SK-N-SH (cell line): ENCODE measurements at regions of chr1 and their contacts with region 1.

Region 1: DNA sequence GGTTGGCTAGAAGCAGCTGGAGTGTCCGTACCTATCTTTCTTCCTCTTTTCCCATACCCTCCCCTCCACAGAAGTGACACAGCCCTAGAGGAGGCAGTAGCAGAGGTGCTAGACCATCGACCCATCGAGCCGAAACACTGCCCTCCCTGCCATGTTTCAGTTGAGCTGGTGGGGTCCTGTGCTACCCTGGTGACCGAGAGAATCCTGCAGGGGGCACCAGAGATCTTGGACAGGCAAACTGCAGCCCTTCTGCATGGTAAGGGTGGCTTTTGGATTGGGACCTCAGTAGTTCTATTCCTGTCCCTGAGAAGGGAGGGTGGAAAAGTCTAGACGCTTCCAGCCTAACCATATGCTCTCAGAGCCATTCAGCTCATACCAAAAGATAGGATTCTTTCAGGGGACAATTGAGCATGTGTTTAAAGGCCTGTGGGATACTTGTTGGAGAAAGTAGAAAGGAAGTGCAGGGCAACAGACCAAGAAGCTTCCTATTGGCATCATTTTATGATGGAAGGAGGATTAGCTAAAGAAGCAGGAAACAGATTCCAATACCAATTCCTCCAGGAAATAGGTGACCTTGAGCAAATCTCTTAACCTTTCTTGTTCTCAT is 11.7 kb upstream of the BNIPL start:
- DNase-seq: peak; percentile 80
- H3K4me3 ChIP-seq: no peak overlapping the region; a peak in 1 of 4 replicates
- H3K27ac ChIP-seq: no peak overlapping the region
- H3K4me1 ChIP-seq: no peaks in the 10 kb centered on the region
- H3K27me3 ChIP-seq: no peaks in the 10 kb centered on the region
- CTCF ChIP-seq: peak; percentile 76
- EP300 ChIP-seq: no peak
- RAD21 ChIP-seq: peak; percentile 81

Region 2: DNA sequence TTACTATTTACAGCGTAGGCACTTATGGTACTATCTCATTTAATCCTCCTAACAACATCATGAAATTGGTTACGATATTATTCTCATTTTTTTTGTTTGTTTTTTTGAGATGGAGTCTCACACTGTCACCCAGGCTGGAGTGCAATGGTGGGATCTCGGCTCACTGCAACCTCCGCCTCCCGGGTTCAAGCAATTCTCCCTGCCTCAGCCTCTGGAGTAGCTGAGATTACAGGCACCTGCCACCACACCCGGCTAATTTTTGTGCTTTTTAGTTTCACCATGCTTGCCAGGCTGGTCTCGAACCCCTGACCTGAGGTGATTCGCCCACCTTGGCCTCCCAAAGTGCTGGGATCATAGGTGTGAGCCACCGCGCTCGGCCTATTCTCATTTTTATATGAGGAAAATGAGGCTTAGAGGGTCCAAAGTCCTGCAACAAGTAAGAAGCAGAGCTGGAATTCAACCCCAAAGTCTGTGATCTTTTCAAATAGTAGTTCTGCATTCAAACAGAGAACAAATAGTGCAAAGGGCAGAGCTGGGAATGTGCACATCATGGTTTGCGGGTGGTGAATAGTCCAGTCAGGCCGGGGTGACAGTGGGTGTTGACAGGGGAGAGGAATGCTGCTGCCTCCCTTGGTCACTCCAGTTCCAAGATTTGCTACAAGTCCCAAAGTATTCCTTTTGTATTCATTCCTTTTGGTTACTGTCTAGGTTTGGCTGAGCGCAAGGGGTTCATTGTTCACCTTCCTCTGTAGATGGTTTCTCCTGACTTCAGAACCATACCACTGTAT is 11.8 kb before region 1 on chr1:
- CTCF ChIA-PET with region 1: interaction called, 13 read pairs
- POLR2A ChIA-PET with region 1: no interaction called
- DNase-seq: no peak
- H3K4me3 ChIP-seq: no peak overlapping the region
- H3K27ac ChIP-seq: no peak overlapping the region
- H3K4me1 ChIP-seq: peaks cover 5 to 6% of the 10 kb centered on the region in 2 experiments; a peak in 1 of 4 replicates
- H3K27me3 ChIP-seq: no peaks in the 10 kb centered on the region
- CTCF ChIP-seq: no peak
- EP300 ChIP-seq: no peak
- RAD21 ChIP-seq: no peak

Region 3: GRCh38 chr1:151036363-151036762 is 11.7 kb after region 1 on chr1 and contains the start of gene BNIPL:
- CTCF ChIA-PET with region 1: interaction called, 12 read pairs
- POLR2A ChIA-PET with region 1: no interaction called
- DNase-seq: no peak
- H3K4me3 ChIP-seq: no peak within 1 kb of the TSS
- H3K27ac ChIP-seq: no peak within 1 kb of the TSS
- H3K4me1 ChIP-seq: no peaks in the 10 kb centered on the region
- H3K27me3 ChIP-seq: no peaks in the 10 kb centered on the region
- CTCF ChIP-seq: no peak
- EP300 ChIP-seq: no peak
- RAD21 ChIP-seq: no peak
- polyA plus RNA-seq, gene BNIPL: 0.12 and 0.16 TPM in 2 replicates

Region 4: GRCh38 chr1:151133011-151133806 is 108.6 kb after region 1 on chr1:
- CTCF ChIA-PET with region 1: no interaction called
- POLR2A ChIA-PET with region 1: no interaction called
- DNase-seq: peak; percentile 18
- H3K4me3 ChIP-seq: no peak overlapping the region
- H3K27ac ChIP-seq: no peak overlapping the region
- H3K4me1 ChIP-seq: no peaks in the 10 kb centered on the region
- H3K27me3 ChIP-seq: no peaks in the 10 kb centered on the region
- CTCF ChIP-seq: no peak
- EP300 ChIP-seq: no peak
- RAD21 ChIP-seq: no peak

Region 5: DNA sequence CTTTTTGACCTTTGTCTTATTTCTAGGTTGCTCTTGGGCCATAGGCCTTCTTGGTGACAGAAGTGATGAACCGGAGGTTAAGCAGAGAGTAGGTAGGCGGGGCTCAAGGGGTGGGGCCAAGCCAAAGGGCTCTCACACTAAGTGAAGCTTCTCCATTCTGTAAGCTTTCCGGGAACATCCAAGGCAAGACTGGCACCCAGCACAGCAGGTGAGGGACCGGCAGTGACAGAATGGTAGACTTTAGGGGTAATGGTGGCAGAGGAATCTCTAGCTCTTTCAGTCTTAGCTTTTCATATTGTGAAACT is 131.8 kb after region 1 on chr1 and contains the start of gene TNFAIP8L2:
- CTCF ChIA-PET with region 1: interaction called, 20 read pairs
- POLR2A ChIA-PET with region 1: no interaction called
- DNase-seq: no peak
- H3K4me3 ChIP-seq: no peak within 1 kb of the TSS
- H3K27ac ChIP-seq: no peak within 1 kb of the TSS
- H3K4me1 ChIP-seq: no peaks in the 10 kb centered on the region
- H3K27me3 ChIP-seq: no peaks in the 10 kb centered on the region
- CTCF ChIP-seq: no peak
- EP300 ChIP-seq: no peak
- RAD21 ChIP-seq: no peak
- polyA plus RNA-seq, gene TNFAIP8L2: not detected in 2 replicates

Region 6: GRCh38 chr1:151210830-151211229 is 186.2 kb after region 1 on chr1:
- CTCF ChIA-PET with region 1: no interaction called
- POLR2A ChIA-PET with region 1: no interaction called
- DNase-seq: no peak
- H3K4me3 ChIP-seq: no peak overlapping the region
- H3K27ac ChIP-seq: 0 out of 4 replicates have a peak overlapping the region, but pooled peaks of 1 of the 2 experiments have one; percentile 13
- H3K4me1 ChIP-seq: no peaks in the 10 kb centered on the region
- H3K27me3 ChIP-seq: no peaks in the 10 kb centered on the region
- CTCF ChIP-seq: no peak
- EP300 ChIP-seq: no peak
- RAD21 ChIP-seq: no peak

Region 7: GRCh38 chr1:151953409-151954094 is 928.9 kb after region 1 on chr1:
- CTCF ChIA-PET with region 1: no interaction called
- POLR2A ChIA-PET with region 1: no interaction called
- DNase-seq: no peak
- H3K4me3 ChIP-seq: no peak overlapping the region
- H3K27ac ChIP-seq: no peak overlapping the region
- H3K4me1 ChIP-seq: no peaks in the 10 kb centered on the region
- H3K27me3 ChIP-seq: peaks cover 62% of the 10 kb centered on the region; the same call in 1 of the 2 replicates
- CTCF ChIP-seq: no peak
- EP300 ChIP-seq: no peak
- RAD21 ChIP-seq: no peak